ENCODE measurements at regions of chr11 and their contacts with region 1.

Region 1: DNA sequence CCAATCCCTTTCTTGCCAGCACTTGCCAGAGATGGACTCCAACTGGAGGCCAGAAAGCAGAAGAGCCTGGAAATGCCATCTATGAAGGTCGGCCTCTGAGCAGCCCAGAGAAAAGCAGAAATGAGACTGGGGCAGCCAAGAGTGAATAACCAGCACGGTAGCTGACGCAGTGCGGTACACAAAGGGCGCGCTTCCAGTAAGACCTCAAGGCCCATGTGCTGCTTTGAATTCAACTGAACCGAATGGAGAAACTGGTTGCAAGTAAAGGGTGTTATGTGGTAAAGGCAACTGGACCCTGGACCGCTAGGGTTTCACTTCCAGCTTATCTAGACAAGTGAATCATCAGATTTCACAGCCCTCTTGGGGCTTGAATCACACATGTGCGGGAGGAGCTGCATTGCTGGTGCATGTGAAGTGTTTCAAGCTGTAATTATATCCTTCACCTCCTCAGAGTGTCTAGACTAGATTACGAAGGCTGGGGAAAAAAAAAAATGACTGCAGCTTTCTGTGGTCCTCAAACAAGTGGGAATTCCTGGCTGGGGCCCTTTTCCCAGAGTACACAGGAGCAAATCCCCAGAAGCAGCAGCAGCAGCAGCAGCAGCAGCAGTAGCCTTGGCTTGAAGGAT is 128.9 kb downstream of the CCDC34 start:
- DNase-seq: peak; percentile 49 to 59
- ATAC-seq: peak; percentile 91 to 95
- H3K4me3 ChIP-seq: peak overlapping the region in 3 of 4 donors; percentile 11 to 28 (median 14)
- H3K27ac ChIP-seq: peak overlapping the region; percentile 70 to 86 (median 81)
- H3K4me1 ChIP-seq: peaks cover 15 to 22% of the 10 kb centered on the region in 2 donors
- H3K27me3 ChIP-seq: no peaks in the 10 kb centered on the region
- CTCF ChIP-seq: peak in 1 of 5 experiments; percentile 10
- POLR2A ChIP-seq: no peak

Region 2: DNA sequence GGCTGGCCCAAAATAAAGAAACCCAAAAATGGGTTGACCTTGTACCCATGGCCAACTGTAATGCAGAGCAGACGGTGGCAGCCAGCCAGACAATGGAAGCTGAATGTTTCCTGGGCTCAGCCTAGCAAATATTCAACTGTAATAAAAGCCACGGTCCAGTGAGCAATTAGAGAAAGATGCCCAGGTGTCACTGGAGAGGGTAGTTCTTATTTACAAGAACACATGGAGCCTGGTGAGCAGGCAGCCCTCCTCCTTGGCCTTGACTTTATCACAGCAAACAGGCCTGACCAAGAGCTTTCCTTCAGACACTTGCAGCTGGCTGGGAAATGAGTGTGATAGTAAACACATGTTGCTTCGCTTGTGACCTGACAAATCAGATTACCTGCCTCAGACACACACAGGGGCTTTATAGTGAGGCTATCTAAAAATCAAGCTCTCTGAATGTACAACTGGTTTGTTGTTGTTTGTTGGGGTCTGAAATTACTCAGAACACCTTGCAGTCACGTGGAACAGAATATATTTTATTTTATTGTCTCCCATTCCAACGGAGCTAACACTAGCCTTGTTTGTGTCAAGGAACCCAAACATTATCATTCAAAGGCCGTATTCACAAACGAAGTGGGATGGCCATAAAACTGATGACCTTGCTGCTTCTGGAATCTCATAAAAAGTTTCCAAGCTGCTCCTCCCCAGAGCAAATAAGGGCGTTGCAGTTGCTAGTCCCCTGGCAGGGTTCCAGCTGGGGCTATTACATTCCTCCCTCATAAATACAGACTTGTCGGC is 32.5 kb before region 1 on chr11:
- in situ Hi-C with region 1: no loop called
- intact Hi-C with region 1: loop called (anchors 2 kb)
- DNase-seq: peak; percentile 62 to 73
- ATAC-seq: peak; percentile 76 to 80
- H3K4me3 ChIP-seq: no peak overlapping the region
- H3K27ac ChIP-seq: peak overlapping the region; percentile 74 to 83 (median 78)
- H3K4me1 ChIP-seq: peaks cover 37 to 41% of the 10 kb centered on the region in 2 donors
- H3K27me3 ChIP-seq: no peaks in the 10 kb centered on the region
- CTCF ChIP-seq: no peak
- POLR2A ChIP-seq: no peak

Region 3: DNA sequence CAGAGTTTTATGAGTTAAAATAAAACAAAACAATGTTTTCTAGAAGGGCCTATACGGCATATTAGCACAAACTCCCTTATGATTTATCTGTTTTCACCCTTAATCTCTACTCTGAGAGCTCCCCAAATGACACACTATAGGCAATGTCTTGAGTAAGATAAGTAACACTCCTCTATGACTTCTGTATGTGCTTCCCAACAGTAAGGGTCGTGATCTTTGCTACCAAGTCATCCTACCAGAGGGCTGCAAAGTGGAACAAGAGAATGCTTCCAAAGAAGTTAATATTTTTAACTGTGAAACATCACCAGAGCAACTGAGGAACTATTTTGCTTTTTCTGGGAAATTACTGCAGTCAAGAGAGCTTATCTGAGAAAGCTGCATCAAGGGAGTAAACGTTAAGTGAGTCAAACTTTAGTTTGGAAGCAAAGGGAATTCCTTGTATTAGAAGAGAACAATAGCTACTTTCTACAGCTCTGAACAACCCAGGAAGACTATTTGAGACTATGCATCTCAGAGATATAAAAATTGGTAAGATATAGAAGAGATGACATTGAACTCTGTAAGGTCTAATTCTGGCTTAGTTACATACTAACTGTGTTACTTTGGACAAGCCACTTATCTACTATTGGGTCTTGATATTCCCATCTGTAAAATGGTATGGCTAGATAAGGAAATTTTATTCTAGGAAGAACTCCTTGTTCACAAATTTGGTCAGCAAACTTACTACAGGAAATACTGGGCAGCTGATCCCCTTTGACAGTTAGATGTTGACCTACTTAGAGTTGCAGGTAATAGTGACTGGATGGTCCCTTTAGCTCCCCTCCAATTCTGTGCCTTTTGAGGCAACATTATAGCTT is 172.6 kb after region 1 on chr11:
- in situ Hi-C with region 1: no loop called
- intact Hi-C with region 1: no loop called
- DNase-seq: no peak
- ATAC-seq: no peak
- H3K4me3 ChIP-seq: no peak overlapping the region
- H3K27ac ChIP-seq: no peak overlapping the region
- H3K4me1 ChIP-seq: peaks cover 0 to 6% of the 10 kb centered on the region in 2 donors
- H3K27me3 ChIP-seq: no peaks in the 10 kb centered on the region
- CTCF ChIP-seq: no peak
- POLR2A ChIP-seq: no peak

Region 4: GRCh38 chr11:27783701-27784355 is 549.7 kb after region 1 on chr11:
- in situ Hi-C with region 1: no loop called
- intact Hi-C with region 1: no loop called
- DNase-seq: no peak
- ATAC-seq: no peak
- H3K4me3 ChIP-seq: no peak overlapping the region
- H3K27ac ChIP-seq: no peak overlapping the region
- H3K4me1 ChIP-seq: no peaks in the 10 kb centered on the region
- H3K27me3 ChIP-seq: no peaks in the 10 kb centered on the region
- CTCF ChIP-seq: no peak
- POLR2A ChIP-seq: no peak

Measured in gastrocnemius medialis (tissue), 4 donors.